ENCODE measurements at regions of chr16 and their contacts with region 1.

Region 1: GRCh38 chr16:87056083-87056482 is 261.1 kb downstream of the C16orf95 start:
- DNase-seq: peak; percentile 24
- H3K4me3 Mint-ChIP-seq: no peak overlapping the region
- H3K27ac Mint-ChIP-seq: no peak overlapping the region
- H3K4me1 Mint-ChIP-seq: no peaks in the 10 kb centered on the region
- H3K27me3 Mint-ChIP-seq: no peaks in the 10 kb centered on the region
- CTCF ChIP-seq: peak; percentile 14

Region 2: DNA sequence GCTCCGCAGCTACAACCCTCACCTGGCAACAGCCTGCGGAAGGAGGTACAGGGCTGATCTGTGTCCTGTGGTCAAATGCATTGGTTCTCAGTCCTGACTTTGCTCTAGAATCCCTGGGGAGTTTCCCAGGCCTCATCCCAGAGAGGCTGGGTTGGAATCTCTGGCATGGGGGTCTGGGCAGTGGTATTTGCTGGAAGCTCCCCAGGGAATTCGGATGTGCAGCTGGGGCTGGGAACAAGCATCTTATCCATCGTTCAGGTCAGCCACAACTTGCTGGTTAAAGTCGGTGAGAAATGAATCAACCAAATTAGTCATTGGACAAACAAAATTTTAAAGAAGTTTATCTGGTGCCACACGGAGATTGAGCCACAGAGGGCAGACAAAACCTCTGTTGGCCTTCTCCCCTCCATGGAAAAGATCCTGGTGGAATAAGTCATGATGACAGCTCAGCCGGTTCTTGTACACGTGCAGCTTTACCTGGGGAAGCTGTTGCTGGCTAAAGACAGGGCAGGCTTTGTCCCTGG is 246.6 kb before region 1 on chr16:
- CTCF ChIA-PET with region 1: no interaction called
- POLR2A ChIA-PET with region 1: no interaction called
- intact Hi-C with region 1: loop called (anchors 1 kb)
- DNase-seq: peak; percentile 75
- H3K4me3 Mint-ChIP-seq: no peak overlapping the region
- H3K27ac Mint-ChIP-seq: no peak overlapping the region
- H3K4me1 Mint-ChIP-seq: peaks cover 9% of the 10 kb centered on the region
- H3K27me3 Mint-ChIP-seq: no peaks in the 10 kb centered on the region
- CTCF ChIP-seq: peak; percentile 27

Region 3: GRCh38 chr16:87002717-87003413 is 53.2 kb before region 1 on chr16:
- CTCF ChIA-PET with region 1: no interaction called
- POLR2A ChIA-PET with region 1: no interaction called
- intact Hi-C with region 1: no loop called
- DNase-seq: peak; percentile 41
- H3K4me3 Mint-ChIP-seq: no peak overlapping the region
- H3K27ac Mint-ChIP-seq: no peak overlapping the region
- H3K4me1 Mint-ChIP-seq: peaks cover 6% of the 10 kb centered on the region
- H3K27me3 Mint-ChIP-seq: peaks cover 18% of the 10 kb centered on the region
- CTCF ChIP-seq: no peak

Region 4: DNA sequence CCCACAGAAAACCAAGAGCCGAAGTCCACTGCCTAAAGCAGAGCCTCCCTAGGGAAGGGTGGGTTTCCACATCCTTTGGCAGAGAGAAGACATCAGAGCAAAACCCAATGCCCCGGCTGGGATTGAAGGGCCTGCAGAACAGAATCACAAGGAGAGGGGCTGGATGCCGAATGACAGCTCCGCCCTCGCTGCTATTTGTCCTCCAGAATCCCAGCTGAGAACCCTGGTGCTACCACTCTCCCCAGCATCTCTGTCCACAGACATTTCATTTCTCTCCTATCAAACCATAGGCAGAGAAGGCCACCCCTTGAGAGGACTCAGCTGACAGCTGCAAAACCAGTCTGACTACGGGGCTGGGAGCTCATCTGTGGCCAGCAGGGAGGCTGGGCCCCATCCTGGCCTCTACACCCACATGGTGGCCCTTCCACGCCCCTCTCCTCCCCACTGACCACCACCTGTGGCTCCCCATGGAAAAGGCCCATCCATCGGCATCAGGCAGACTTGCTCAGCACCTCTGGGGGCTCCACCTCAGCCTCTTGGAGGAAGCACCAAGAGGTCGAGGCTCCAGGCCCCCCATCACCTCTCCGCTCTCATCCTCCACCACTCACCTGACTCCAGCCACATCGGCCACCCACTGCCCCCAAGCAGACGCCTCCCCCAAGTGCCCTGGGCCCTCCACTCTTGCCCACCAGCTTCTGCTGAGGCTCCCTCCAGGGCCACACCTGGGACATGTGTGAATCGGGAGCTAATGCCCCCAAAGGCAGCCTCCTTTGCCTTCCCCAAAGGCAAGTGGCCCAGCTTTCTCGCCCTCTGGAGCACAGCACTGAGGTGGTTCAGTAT is 27.4 kb before region 1 on chr16:
- CTCF ChIA-PET with region 1: no interaction called
- POLR2A ChIA-PET with region 1: no interaction called
- intact Hi-C with region 1: no loop called
- DNase-seq: no peak
- H3K4me3 Mint-ChIP-seq: no peak overlapping the region
- H3K27ac Mint-ChIP-seq: no peak overlapping the region
- H3K4me1 Mint-ChIP-seq: no peaks in the 10 kb centered on the region
- H3K27me3 Mint-ChIP-seq: no peaks in the 10 kb centered on the region
- CTCF ChIP-seq: no peak

Measured in MCF 10A (cell line).